ENCODE measurements at regions of chr3 and their contacts with region 1.

Region 1: GRCh38 chr3:118973050-118973449 is 61.6 kb downstream of the IGSF11 start:
- DNase-seq: peak; percentile 69
- ATAC-seq: peak; percentile 91

Region 2: DNA sequence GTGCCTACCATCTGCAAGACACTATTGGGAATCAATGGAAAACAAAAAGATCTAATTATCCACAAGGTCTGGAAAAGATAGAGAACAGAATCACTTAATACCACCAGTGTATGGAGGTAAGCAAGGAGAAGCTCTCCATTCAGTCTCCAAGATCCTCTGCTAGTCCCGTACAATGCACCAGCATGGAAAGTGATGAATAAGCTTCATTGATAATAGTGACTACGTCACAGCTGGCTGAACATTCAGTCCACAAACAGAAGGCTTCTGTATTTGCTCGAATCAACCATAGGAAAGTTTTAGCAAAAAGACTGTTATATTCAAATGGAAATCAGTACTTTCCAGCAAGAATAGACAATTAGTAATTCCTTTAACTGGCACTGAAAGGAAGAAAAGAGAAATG is 18.7 kb after region 1 on chr3:
- intact Hi-C with region 1: loop called (anchors 2 kb)
- DNase-seq: no peak
- ATAC-seq: peak; percentile 87

Region 3: DNA sequence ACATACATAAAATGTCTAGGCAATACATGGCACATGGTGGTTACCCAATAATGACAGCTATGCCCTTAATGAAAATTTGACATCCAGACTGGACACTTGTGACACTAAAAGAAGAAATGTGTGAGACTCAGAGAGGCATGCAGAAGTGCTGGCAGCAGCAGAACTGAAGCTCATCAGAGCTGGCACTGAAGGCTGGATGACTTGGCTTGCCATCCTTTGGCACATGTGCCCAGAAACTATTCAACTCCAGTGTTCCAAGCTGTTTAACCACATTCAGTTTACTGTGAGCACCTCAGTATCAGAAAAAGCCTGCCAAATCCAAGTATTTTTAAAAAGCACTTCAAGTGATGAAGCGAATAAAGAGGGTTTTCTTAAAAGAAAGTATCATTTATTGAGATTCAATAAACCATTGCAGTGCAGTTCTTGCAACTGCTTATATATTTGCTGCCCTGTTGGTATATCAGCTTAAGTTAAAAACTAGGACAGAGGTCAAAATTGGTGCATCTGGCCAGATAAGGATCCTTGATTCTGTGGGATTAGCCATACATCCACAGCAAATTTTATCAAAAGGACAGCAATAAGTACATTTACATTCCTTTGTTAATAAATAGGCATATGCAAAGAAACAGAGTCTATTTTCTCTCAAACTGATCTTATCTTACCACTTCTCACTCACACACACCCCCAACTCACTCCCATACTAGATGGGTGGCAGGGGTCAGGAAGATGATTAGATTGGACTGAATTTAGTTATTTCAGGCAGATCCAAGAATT is 45.8 kb after region 1 on chr3:
- intact Hi-C with region 1: loop called (anchors 5 kb)
- DNase-seq: no peak
- ATAC-seq: peak; percentile 83